Activated naive CD4-positive, alpha-beta T cell treated with anti-CD3 and anti-CD28 coated beads, Interleukin-2, amount 10 ng/mL, durations not matched to agents 7 days and 5 days (primary cell): ENCODE measurements at regions of chr6 and their contacts with region 1.

Region 1: GRCh38 chr6:125956506-125957390 is at the start of gene HINT3:
- DNase-seq: peak; percentile 99
- H3K4me3 Mint-ChIP-seq: no peak within 1 kb of the TSS
- H3K27ac Mint-ChIP-seq: peak within 1 kb of the TSS; percentile 68
- H3K4me1 Mint-ChIP-seq: peaks cover 8% of the 10 kb centered on the region
- H3K27me3 Mint-ChIP-seq: peaks cover 15% of the 10 kb centered on the region

Region 2: GRCh38 chr6:125639466-125640020 is 317.2 kb before region 1 on chr6:
- CTCF ChIA-PET with region 1: no interaction called
- DNase-seq: no peak
- H3K4me3 Mint-ChIP-seq: no peak overlapping the region
- H3K27ac Mint-ChIP-seq: no peak overlapping the region
- H3K4me1 Mint-ChIP-seq: no peaks in the 10 kb centered on the region
- H3K27me3 Mint-ChIP-seq: no peaks in the 10 kb centered on the region

Region 3: GRCh38 chr6:125790358-125791150 is 166.2 kb before region 1 on chr6 and contains the start of gene NCOA7:
- CTCF ChIA-PET with region 1: interaction called, 140 read pairs
- DNase-seq: peak; percentile 87
- H3K4me3 Mint-ChIP-seq: peak within 1 kb of the TSS; percentile 91
- H3K27ac Mint-ChIP-seq: peak within 1 kb of the TSS; percentile 99
- H3K4me1 Mint-ChIP-seq: peaks cover 55% of the 10 kb centered on the region
- H3K27me3 Mint-ChIP-seq: no peaks in the 10 kb centered on the region

Region 4: GRCh38 chr6:125858427-125859320 is 98.1 kb before region 1 on chr6:
- CTCF ChIA-PET with region 1: interaction called, 18 read pairs
- DNase-seq: peak; percentile 37
- H3K4me3 Mint-ChIP-seq: no peak overlapping the region
- H3K27ac Mint-ChIP-seq: no peak overlapping the region
- H3K4me1 Mint-ChIP-seq: no peaks in the 10 kb centered on the region
- H3K27me3 Mint-ChIP-seq: no peaks in the 10 kb centered on the region

Region 5: GRCh38 chr6:125906158-125906998 is 50.4 kb before region 1 on chr6:
- CTCF ChIA-PET with region 1: interaction called, 26 read pairs
- DNase-seq: peak; percentile 65
- H3K4me3 Mint-ChIP-seq: no peak overlapping the region
- H3K27ac Mint-ChIP-seq: no peak overlapping the region
- H3K4me1 Mint-ChIP-seq: peaks cover 22% of the 10 kb centered on the region
- H3K27me3 Mint-ChIP-seq: no peaks in the 10 kb centered on the region

Region 6: GRCh38 chr6:125923987-125924568 is 32.7 kb before region 1 on chr6:
- CTCF ChIA-PET with region 1: interaction called, 20 read pairs
- DNase-seq: no peak
- H3K4me3 Mint-ChIP-seq: no peak overlapping the region
- H3K27ac Mint-ChIP-seq: peak overlapping the region; percentile 28
- H3K4me1 Mint-ChIP-seq: peaks cover 42% of the 10 kb centered on the region
- H3K27me3 Mint-ChIP-seq: no peaks in the 10 kb centered on the region

Region 7: DNA sequence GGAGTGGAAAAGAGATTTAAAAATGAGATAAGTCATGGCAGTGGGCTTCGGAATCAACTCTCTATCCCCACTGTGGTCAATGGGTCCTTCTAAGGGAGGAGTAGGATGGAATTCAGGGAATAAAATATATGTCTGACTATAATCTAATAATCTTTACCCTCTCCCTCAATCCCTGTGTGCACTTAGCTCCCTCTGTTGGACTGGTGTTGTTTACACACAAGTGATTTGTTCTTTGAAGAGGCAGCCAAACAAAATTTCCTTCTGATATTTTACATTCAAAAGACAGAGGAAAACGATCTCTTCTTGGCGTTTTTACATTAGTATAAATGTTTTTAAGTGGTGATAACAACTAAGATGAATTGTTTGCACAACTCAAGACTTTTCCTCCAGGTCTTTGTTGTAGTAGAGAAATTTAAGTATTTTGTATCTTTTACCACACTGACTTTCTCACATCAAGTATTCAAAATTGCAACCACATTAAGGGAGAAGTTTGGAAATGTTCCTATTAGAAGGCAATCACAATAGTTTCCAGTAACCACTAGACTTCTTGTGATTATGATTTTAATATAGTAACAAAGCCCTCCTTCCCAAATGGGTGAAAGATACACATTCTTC is 700.9 kb after region 1 on chr6:
- CTCF ChIA-PET with region 1: no interaction called
- DNase-seq: no peak
- H3K4me3 Mint-ChIP-seq: no peak overlapping the region
- H3K27ac Mint-ChIP-seq: no peak overlapping the region
- H3K4me1 Mint-ChIP-seq: no peaks in the 10 kb centered on the region
- H3K27me3 Mint-ChIP-seq: no peaks in the 10 kb centered on the region